Posterior vena cava (tissue), 2 donors: ENCODE measurements at regions of chr3 and their contacts with region 1.

Region 1: GRCh38 chr3:112635671-112636070 is 5.3 kb downstream of the CCDC80 start:
- DNase-seq: no peak

Region 2: DNA sequence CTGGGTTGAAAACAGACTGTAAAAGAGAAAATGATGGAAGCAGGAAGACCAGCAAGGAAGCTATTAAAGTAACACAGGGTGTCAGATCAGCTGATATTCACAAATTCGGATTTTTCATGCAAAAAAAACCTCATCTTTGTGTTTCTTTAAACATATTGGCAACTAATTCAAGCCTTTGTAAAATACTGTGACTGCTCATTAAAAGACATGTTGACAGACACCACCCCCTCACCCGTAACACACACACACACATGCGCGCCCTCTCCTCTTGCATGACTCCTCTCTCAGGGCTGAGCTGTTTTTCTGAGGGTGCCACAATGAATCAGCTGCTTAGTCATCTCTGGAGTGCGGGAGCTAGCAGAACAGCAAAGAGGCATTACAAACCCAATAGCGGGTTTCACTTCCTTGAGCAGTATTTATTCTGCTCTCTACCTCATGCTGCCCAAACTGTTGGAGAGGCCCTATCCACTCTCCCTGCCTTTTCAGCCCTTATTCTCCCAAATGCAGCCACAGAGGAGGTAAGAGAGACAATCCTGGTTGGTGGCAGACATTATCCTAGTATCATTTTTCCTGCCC is 41.1 kb after region 1 on chr3:
- intact Hi-C with region 1: no loop called
- DNase-seq: peak; percentile 90

Region 3: GRCh38 chr3:112709911-112710310 is 74.2 kb after region 1 on chr3:
- intact Hi-C with region 1: no loop called
- DNase-seq: no peak

Region 4: DNA sequence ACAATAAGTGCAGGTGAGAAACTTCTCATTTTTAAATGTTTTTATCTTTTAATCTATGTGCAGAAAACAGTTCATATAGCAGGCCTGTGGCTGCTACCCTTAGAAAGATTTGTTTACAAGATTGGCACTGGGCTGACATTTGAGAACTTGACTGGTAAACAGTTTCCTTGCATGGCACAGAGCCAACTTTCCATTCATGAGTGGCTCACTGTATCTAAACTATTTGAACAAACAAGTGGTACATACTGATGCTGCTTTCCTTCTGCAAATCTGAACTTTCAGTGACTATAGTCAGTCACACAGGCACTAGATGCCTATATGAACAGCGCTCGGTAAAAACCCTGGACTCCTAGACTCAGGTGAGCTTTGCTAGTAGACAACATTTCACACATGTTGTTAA is 348.8 kb after region 1 on chr3:
- intact Hi-C with region 1: loop called (anchors 5 to 10 kb)
- DNase-seq: no peak